Activated T-helper 2 cell treated with anti-CD3 and anti-CD28 coated beads, Interferon-gamma antibody, Interleukin-2, Interleukin-4, amounts not matched to agents 10 μg/mL and 5 μg/mL and 100 μg/mL, durations not matched to agents 14 hours and 24 hours and 36 hours (primary cell): ENCODE measurements at regions of chr12 and their contacts with region 1.

Region 1: GRCh38 chr12:132887513-132888351 is at the start of gene CHFR:
- DNase-seq: peak; percentile 94
- H3K4me3 Mint-ChIP-seq: peak within 1 kb of the TSS; percentile 97
- H3K27ac Mint-ChIP-seq: peak within 1 kb of the TSS; percentile 99
- H3K4me1 Mint-ChIP-seq: peaks cover 13% of the 10 kb centered on the region
- H3K27me3 Mint-ChIP-seq: peaks cover 3% of the 10 kb centered on the region
- total RNA-seq, gene CHFR: 55.0 and 59.9 TPM in 2 replicates

Region 2: DNA sequence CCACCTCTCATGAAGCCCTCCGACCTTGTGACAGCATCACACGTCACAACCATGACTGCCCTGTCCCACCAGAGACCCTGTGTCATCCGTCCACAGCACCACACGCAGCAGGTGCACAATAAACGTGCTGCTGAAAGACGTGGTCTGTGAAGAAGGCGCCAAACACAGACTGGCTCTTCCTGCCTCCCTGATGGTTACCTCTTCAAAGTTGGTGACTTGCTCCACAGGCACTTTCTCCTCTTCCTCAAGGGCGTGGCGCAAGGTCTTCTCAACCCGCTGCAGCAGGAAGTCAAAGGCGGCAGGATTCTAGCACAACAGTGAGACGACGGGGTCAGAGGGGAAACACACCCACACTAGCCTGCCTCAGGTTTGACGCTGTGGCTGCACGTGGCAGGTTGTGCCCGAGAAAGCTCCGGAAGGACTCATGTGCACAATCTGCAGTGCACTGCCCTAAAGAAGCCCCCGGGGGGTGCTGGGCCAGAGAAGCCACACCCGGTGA is 215.7 kb before region 1 on chr12:
- intact Hi-C with region 1: no loop called
- DNase-seq: no peak
- H3K4me3 Mint-ChIP-seq: no peak overlapping the region
- H3K27ac Mint-ChIP-seq: no peak overlapping the region
- H3K4me1 Mint-ChIP-seq: no peaks in the 10 kb centered on the region
- H3K27me3 Mint-ChIP-seq: no peaks in the 10 kb centered on the region

Region 3: DNA sequence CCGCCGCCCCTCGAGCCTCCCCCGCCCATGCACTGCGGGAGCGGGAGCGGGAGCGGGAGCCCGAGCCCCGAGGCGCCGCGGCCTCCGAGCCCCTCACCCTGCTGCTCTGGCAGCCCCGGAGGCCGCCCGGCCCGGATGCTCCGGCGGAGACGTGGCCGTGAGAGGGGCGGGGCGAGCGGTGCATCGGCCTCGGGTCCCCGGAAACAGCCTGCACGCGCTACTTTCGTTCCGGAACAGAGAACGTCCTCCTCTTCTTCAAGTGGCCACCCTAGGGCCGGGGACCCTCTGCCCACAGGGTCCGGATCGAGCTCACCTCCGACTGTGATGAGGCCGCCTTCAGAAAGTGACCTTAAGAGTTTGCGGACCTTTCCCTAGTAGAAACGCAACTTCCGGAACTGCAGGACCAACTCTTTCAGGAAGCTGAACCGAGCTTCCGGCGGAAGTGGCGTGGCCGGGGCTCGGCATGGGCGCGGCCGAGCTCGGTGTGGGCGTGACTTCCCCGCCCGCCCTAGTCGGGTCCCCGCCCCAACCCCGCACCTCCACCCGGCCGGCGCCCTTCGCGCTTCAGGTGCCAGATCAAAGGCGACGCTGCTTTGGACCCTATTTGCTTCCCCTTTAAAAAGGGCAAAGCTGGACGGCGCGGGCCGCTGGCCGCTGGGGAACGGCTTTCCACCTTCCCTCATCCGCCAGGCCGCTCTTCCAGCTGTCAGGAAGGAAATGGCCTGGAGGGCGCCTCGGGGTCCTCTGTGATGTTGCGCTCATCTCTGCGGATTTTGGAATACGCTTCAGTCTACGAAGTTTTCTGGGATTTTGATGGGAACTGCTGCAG is 58.8 kb before region 1 on chr12 and contains the start of gene GOLGA3:
- intact Hi-C with region 1: loop called (anchors 5 kb)
- DNase-seq: peak; percentile 89
- H3K4me3 Mint-ChIP-seq: peak within 1 kb of the TSS; percentile 98
- H3K27ac Mint-ChIP-seq: peak within 1 kb of the TSS; percentile 100
- H3K4me1 Mint-ChIP-seq: peaks cover 36% of the 10 kb centered on the region
- H3K27me3 Mint-ChIP-seq: no peaks in the 10 kb centered on the region
- total RNA-seq, gene GOLGA3: 64.5 and 66.2 TPM in 2 replicates

Region 4: GRCh38 chr12:132908145-132909044 is 20.7 kb after region 1 on chr12:
- intact Hi-C with region 1: loop called (anchors 2 kb)
- DNase-seq: peak; percentile 93
- H3K4me3 Mint-ChIP-seq: peak overlapping the region; percentile 86
- H3K27ac Mint-ChIP-seq: peak overlapping the region; percentile 94
- H3K4me1 Mint-ChIP-seq: peaks cover 4% of the 10 kb centered on the region
- H3K27me3 Mint-ChIP-seq: peaks cover 13% of the 10 kb centered on the region

Region 5: DNA sequence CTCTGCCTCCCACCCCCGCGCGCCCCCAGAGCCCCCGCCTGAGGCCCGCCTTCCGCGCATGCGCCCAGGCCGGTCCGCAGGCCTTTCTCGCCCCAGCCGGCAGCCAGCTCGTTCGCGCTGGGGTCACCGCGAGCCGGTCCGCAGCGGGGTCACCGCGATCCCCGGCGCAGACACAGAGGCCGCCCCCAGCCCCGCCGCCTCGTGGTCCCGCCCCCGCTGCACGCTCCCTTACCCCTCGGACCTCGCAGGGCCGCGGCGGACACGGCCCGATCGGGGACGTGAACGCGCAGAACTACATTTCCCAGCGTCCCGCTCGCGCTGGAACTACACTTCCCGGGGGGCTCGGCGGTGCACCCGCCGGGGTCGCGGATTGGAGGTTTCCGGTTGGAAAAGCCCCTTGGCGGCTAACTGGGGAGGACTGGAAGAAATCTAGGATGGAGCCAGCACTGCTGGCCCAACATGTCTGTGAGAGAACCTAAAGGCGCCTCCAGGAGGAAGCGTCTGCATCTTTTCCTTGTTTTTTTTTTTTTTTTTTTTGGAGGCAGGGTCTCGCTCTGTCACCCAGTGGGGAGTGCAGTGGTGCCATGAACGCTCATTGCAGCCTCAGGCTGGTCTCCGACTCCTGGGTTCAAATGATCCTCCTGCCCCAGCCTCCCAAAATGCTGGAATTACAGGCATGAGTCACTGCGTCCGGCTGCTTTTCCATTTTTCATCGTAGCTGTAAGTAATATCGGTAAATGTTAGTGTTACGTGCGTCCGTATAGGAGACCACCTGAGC is 68.5 kb after region 1 on chr12 and contains the start of gene ZNF605:
- intact Hi-C with region 1: loop called (anchors 1 kb)
- DNase-seq: peak; percentile 82
- H3K4me3 Mint-ChIP-seq: peak within 1 kb of the TSS; percentile 96
- H3K27ac Mint-ChIP-seq: peak within 1 kb of the TSS; percentile 96
- H3K4me1 Mint-ChIP-seq: peaks cover 12% of the 10 kb centered on the region
- H3K27me3 Mint-ChIP-seq: no peaks in the 10 kb centered on the region
- total RNA-seq, gene ZNF605: 7.3 and 8.2 TPM in 2 replicates

Region 6: DNA sequence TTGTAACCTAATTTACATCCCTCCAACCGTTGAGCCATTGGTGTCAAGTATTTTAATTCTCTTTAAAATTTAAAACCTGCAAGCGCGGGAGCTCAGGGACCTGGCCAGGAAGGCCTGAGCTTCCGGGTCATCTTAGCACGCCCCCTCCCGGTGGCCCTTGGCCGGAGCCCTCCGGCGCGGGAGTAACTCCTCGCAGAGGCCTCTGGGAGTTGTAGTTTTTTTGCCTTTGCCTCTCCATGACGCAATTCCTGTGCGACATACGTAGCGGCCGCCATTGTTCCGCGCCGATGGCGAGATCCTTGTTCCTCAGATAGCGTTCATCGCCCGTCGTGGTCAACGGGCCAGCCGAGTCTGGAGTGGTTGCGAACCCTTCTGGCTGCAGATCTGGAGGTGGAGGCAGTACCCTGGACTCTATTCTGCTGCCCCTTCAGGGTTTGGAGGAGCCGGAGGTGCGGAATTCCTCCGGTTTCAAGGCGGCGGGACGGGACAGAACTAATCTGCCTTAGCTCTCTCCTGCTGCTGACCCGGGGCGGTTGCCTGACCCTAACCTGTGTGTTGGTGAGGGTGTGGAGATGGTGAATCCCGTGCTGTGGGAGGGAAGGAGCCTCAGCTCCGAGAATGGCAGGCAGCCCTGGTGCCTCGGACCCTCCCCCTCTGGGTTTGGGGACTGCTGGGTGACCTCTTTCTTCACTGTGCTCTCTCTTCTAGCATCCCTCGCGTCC is 293.7 kb after region 1 on chr12 and contains the start of gene ZNF268:
- intact Hi-C with region 1: loop called (anchors 1 kb)
- DNase-seq: peak; percentile 88
- H3K4me3 Mint-ChIP-seq: peak within 1 kb of the TSS; percentile 99
- H3K27ac Mint-ChIP-seq: peak within 1 kb of the TSS; percentile 95
- H3K4me1 Mint-ChIP-seq: peaks cover 1% of the 10 kb centered on the region
- H3K27me3 Mint-ChIP-seq: no peaks in the 10 kb centered on the region
- total RNA-seq, gene ZNF268: 12.7 and 17.2 TPM in 2 replicates